ENCODE measurements at regions of chr17 and their contacts with region 1.

Region 1: DNA sequence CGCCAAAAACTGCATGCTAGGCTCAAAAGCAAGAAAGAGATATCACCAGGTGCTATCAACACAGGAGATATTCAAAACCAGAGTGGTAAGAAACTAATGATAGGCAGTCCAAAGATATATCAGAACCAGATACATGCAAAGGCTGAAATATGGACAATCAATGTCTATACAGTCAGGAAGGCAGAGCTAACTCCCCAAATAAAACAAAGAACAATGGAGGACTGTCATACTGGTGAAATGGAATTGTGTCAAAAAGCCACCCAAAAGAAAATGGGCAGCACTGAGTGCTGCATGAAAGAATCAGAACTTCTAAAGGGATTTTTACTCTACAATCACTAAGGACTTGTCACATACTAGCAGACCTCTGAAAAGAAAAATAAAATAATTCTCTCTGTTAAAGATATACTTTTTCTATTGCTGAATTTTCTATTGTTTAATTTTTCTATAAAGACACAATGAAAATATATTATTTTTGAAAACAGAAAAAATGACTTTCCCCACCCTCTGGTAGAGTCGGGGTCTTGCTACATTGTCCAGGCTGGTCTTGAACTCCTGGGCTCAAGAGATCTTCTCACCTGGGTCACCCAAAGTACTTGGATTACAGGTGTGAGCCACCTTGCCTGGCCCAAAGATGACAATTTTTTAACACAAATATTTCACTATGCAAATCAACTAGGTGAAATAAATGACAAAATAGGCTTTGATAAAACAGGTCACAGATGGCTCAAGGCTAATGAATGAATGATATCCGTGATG is 98.2 kb downstream of the USP32 start:
- DNase-seq: no peak
- ATAC-seq: no peak
- H3K4me3 ChIP-seq: no peak overlapping the region
- H3K27ac ChIP-seq: no peak overlapping the region
- H3K4me1 ChIP-seq: no peaks in the 10 kb centered on the region
- H3K27me3 ChIP-seq: no peaks in the 10 kb centered on the region
- CTCF ChIP-seq: no peak

Region 2: GRCh38 chr17:60244656-60245055 is 49.1 kb before region 1 on chr17:
- intact Hi-C with region 1: loop called in 1 of 2 experiments (anchors 2 kb)
- DNase-seq: no peak
- ATAC-seq: no peak
- H3K4me3 ChIP-seq: no peak overlapping the region
- H3K27ac ChIP-seq: no peak overlapping the region
- H3K4me1 ChIP-seq: no peaks in the 10 kb centered on the region
- H3K27me3 ChIP-seq: no peaks in the 10 kb centered on the region
- CTCF ChIP-seq: no peak

Measured in psoas muscle (tissue), 8 donors.